CD8-positive, alpha-beta T cell (primary cell): ENCODE measurements at regions of chr15 and their contacts with region 1.

Region 1: GRCh38 chr15:40593588-40594428 is at the start of gene KNL1:
- DNase-seq: peak; percentile 70 to 96 (median 85)
- ATAC-seq: peak; percentile 83
- H3K4me3 ChIP-seq: peak within 1 kb of the TSS; percentile 76 to 82
- H3K4me3 Mint-ChIP-seq: peak within 1 kb of the TSS; percentile 95
- H3K27ac ChIP-seq: peak within 1 kb of the TSS; percentile 78 to 92
- H3K27ac Mint-ChIP-seq: peak within 1 kb of the TSS; percentile 98
- H3K4me1 ChIP-seq: no peaks in the 10 kb centered on the region
- H3K4me1 Mint-ChIP-seq: peaks cover 20% of the 10 kb centered on the region
- H3K27me3 ChIP-seq: peaks cover 0 to 2% of the 10 kb centered on the region in 2 experiments
- H3K27me3 Mint-ChIP-seq: peaks cover 6% of the 10 kb centered on the region
- CTCF ChIP-seq: no peak
- total RNA-seq, gene KNL1: 0.83 to 0.98 TPM

Region 2: GRCh38 chr15:40382580-40383456 is 211.0 kb before region 1 on chr15 and contains the start of gene KNSTRN:
- CTCF ChIA-PET with region 1: no interaction called
- POLR2A ChIA-PET with region 1: no interaction called
- intact Hi-C with region 1: loop called in 1 of 2 experiments (anchors 5 kb)
- DNase-seq: peak; percentile 84 to 95 (median 93)
- ATAC-seq: peak; percentile 99
- H3K4me3 ChIP-seq: peak within 1 kb of the TSS; percentile 73 to 93
- H3K4me3 Mint-ChIP-seq: peak within 1 kb of the TSS; percentile 99
- H3K27ac ChIP-seq: peak within 1 kb of the TSS in 1 of 2 experiments; percentile 54
- H3K27ac Mint-ChIP-seq: peak within 1 kb of the TSS; percentile 81
- H3K4me1 ChIP-seq: peaks cover 13% of the 10 kb centered on the region
- H3K4me1 Mint-ChIP-seq: peaks cover 16% of the 10 kb centered on the region
- H3K27me3 ChIP-seq: no peaks in the 10 kb centered on the region
- H3K27me3 Mint-ChIP-seq: no peaks in the 10 kb centered on the region
- CTCF ChIP-seq: no peak
- total RNA-seq, gene KNSTRN: 3.8 to 5.4 TPM

Region 3: DNA sequence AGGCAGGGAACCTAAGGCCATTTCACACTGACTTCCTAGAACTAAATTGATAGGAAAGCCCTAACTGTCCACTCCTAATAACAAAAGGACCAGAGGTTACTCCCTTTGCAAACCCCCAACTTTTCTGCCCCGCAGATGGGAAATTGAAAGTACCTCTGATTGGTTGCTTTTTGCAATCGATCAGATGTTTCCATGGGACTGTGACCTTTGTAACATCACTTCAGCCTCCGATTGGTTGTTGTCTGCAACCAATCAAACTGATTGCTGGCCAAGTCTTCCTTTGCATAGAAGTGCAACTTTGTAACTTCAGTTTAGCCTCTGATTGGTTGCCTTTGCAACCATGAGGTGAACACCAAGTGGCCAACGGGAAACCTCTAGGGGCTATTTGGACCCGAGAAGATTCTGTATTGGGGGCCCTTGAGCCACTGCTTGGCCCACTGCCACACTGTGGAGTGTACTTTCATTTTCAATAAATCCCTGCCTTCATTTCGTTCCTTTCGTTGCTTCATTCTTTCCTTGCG is 11.0 kb before region 1 on chr15:
- CTCF ChIA-PET with region 1: interaction called, 11 read pairs
- POLR2A ChIA-PET with region 1: no interaction called
- intact Hi-C with region 1: no loop called
- DNase-seq: peak in 1 of 9 experiments; percentile 41
- ATAC-seq: no peak
- H3K4me3 ChIP-seq: no peak overlapping the region
- H3K4me3 Mint-ChIP-seq: no peak overlapping the region
- H3K27ac ChIP-seq: no peak overlapping the region
- H3K27ac Mint-ChIP-seq: no peak overlapping the region
- H3K4me1 ChIP-seq: no peaks in the 10 kb centered on the region
- H3K4me1 Mint-ChIP-seq: no peaks in the 10 kb centered on the region
- H3K27me3 ChIP-seq: no peaks in the 10 kb centered on the region
- H3K27me3 Mint-ChIP-seq: peaks cover 3% of the 10 kb centered on the region
- CTCF ChIP-seq: no peak

Region 4: DNA sequence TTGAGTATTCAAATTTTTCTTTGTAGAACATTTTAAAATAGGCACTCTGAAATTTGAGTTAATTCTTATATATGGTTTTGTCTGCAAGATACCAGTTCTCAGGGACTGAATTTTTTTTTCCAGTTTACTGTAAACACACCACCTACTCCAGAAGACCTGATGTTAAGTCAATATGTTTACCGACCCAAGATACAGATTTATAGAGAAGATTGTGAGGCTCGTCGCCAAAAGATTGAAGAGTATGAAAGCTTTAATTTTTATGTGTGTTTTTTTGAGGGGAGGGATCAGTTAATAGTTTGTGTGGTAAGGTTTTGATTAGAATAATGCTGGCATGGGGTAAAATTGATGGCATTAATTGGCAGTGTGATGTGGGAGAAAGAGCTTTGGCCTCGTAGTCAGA is 47.0 kb after region 1 on chr15:
- CTCF ChIA-PET with region 1: no interaction called
- POLR2A ChIA-PET with region 1: no interaction called
- intact Hi-C with region 1: no loop called
- DNase-seq: no peak
- ATAC-seq: no peak
- H3K4me3 ChIP-seq: no peak overlapping the region
- H3K4me3 Mint-ChIP-seq: no peak overlapping the region
- H3K27ac ChIP-seq: no peak overlapping the region
- H3K27ac Mint-ChIP-seq: no peak overlapping the region
- H3K4me1 ChIP-seq: no peaks in the 10 kb centered on the region
- H3K4me1 Mint-ChIP-seq: no peaks in the 10 kb centered on the region
- H3K27me3 ChIP-seq: no peaks in the 10 kb centered on the region
- H3K27me3 Mint-ChIP-seq: no peaks in the 10 kb centered on the region
- CTCF ChIP-seq: no peak

Region 5: DNA sequence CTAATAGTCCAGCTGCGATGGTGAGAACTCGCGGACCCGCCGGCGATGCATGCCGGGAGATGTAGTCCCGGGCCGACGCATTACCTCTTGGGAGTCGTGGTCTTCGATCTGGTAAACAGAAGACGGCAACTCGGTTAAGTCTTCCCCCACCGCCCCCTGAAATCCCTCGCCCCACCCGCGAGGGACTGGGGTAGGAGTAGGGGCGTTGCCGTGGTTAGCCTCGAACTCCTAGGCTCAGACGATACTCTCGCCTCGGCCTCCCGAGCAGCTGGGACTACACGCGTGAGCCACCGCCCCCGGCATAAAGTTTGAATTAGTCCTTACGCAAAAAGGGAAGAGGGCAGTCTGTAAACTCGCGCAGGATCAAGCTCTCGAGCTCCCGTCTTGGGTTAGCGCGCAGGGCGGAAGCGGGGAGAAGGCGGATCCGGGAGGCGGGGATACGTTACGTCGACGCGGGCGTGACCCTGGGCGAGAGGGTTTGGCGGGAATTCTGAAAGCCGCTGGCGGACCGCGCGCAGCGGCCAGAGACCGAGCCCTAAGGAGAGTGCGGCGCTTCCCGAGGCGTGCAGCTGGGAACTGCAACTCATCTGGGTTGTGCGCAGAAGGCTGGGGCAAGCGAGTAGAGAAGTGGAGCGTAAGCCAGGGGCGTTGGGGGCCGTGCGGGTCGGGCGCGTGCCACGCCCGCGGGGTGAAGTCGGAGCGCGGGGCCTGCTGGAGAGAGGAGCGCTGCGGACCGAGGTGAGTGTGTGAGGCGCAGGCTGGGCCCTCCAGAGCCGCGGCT is 101.1 kb after region 1 on chr15 and contains the start of gene RAD51:
- CTCF ChIA-PET with region 1: interaction called, 5 read pairs
- POLR2A ChIA-PET with region 1: interaction called, 3 read pairs
- intact Hi-C with region 1: loop called (anchors 1 to 2 kb)
- DNase-seq: peak; percentile 82 to 96 (median 94)
- ATAC-seq: peak; percentile 94
- H3K4me3 ChIP-seq: peak within 1 kb of the TSS; percentile 84 to 94
- H3K4me3 Mint-ChIP-seq: peak within 1 kb of the TSS; percentile 99
- H3K27ac ChIP-seq: peak within 1 kb of the TSS; percentile 83 to 98
- H3K27ac Mint-ChIP-seq: peak within 1 kb of the TSS; percentile 99
- H3K4me1 ChIP-seq: peaks cover 12% of the 10 kb centered on the region
- H3K4me1 Mint-ChIP-seq: peaks cover 27% of the 10 kb centered on the region
- H3K27me3 ChIP-seq: no peaks in the 10 kb centered on the region
- H3K27me3 Mint-ChIP-seq: no peaks in the 10 kb centered on the region
- CTCF ChIP-seq: no peak
- total RNA-seq, gene RAD51: 1.3 to 1.5 TPM

Region 6: GRCh38 chr15:41331833-41332787 is 738.3 kb after region 1 on chr15 and contains the start of gene OIP5:
- CTCF ChIA-PET with region 1: no interaction called
- POLR2A ChIA-PET with region 1: no interaction called
- intact Hi-C with region 1: loop called in 1 of 2 experiments (anchors 5 kb)
- DNase-seq: peak; percentile 95 to 100 (median 96)
- ATAC-seq: peak; percentile 96
- H3K4me3 ChIP-seq: peak within 1 kb of the TSS; percentile 84 to 94
- H3K4me3 Mint-ChIP-seq: peak within 1 kb of the TSS; percentile 97
- H3K27ac ChIP-seq: peak within 1 kb of the TSS; percentile 46 to 63
- H3K27ac Mint-ChIP-seq: peak within 1 kb of the TSS; percentile 87
- H3K4me1 ChIP-seq: peaks cover 14% of the 10 kb centered on the region
- H3K4me1 Mint-ChIP-seq: peaks cover 30% of the 10 kb centered on the region
- H3K27me3 ChIP-seq: no peaks in the 10 kb centered on the region
- H3K27me3 Mint-ChIP-seq: no peaks in the 10 kb centered on the region
- CTCF ChIP-seq: peak; percentile 58
- total RNA-seq, gene OIP5: not detected